Naive thymus-derived CD4-positive, alpha-beta T cell (primary cell): ENCODE measurements at regions of chr18 and their contacts with region 1.

Region 1: GRCh38 chr18:49447810-49448745 is 12.4 kb downstream of the DYM start:
- DNase-seq: peak in 8 of 9 donors; percentile 8 to 63 (median 28)
- ATAC-seq: peak; percentile 57
- H3K4me3 ChIP-seq: no peak overlapping the region
- H3K4me3 Mint-ChIP-seq: no peak overlapping the region
- H3K27ac ChIP-seq: no peak overlapping the region
- H3K27ac Mint-ChIP-seq: no peak overlapping the region
- H3K4me1 ChIP-seq: no peaks in the 10 kb centered on the region
- H3K4me1 Mint-ChIP-seq: peaks cover 11 to 48% (median 30%) of the 10 kb centered on the region in 7 donors
- H3K27me3 ChIP-seq: no peaks in the 10 kb centered on the region
- H3K27me3 Mint-ChIP-seq: no peaks in the 10 kb centered on the region

Region 2: GRCh38 chr18:49021433-49022129 is 426.5 kb before region 1 on chr18:
- CTCF ChIA-PET with region 1: no interaction called
- POLR2A ChIA-PET with region 1: no interaction called
- intact Hi-C with region 1: loop called in 1 of 2 experiments (anchors 1 kb)
- DNase-seq: peak in 1 of 9 donors; percentile 52
- ATAC-seq: peak; percentile 60
- H3K4me3 ChIP-seq: no peak overlapping the region
- H3K4me3 Mint-ChIP-seq: no peak overlapping the region
- H3K27ac ChIP-seq: no peak overlapping the region
- H3K27ac Mint-ChIP-seq: no peak overlapping the region
- H3K4me1 ChIP-seq: no peaks in the 10 kb centered on the region
- H3K4me1 Mint-ChIP-seq: peaks cover 0 to 11% (median 0%) of the 10 kb centered on the region in 7 donors
- H3K27me3 ChIP-seq: no peaks in the 10 kb centered on the region
- H3K27me3 Mint-ChIP-seq: no peaks in the 10 kb centered on the region

Region 3: GRCh38 chr18:49041435-49042245 is 406.4 kb before region 1 on chr18:
- CTCF ChIA-PET with region 1: no interaction called
- POLR2A ChIA-PET with region 1: no interaction called
- intact Hi-C with region 1: loop called in 1 of 2 experiments (anchors 5 kb)
- DNase-seq: peak in 8 of 9 donors; percentile 16 to 53 (median 44)
- ATAC-seq: peak; percentile 74
- H3K4me3 ChIP-seq: no peak overlapping the region
- H3K4me3 Mint-ChIP-seq: no peak overlapping the region
- H3K27ac ChIP-seq: no peak overlapping the region
- H3K27ac Mint-ChIP-seq: peak overlapping the region in 1 of 9 donors; percentile 35
- H3K4me1 ChIP-seq: no peaks in the 10 kb centered on the region
- H3K4me1 Mint-ChIP-seq: peaks cover 0 to 10% (median 7%) of the 10 kb centered on the region in 7 donors
- H3K27me3 ChIP-seq: no peaks in the 10 kb centered on the region
- H3K27me3 Mint-ChIP-seq: no peaks in the 10 kb centered on the region

Region 4: DNA sequence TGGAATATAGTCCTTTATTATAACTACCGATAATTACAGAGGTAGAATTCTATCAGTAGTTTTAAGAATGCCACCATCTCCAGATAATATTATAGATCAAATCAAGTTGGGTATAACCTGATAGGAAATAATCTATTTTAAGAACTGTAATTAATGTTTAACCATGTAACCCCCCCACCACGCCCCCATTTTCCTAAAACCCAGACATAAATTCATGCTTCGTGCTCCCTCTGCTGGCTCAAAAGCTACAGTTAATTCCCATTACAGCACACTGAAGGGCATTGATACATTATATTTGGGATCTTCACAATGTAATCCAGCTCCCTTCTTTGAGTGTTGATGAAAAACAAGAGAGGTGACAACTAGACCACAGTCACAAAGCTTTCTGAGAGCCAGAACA is 269.3 kb before region 1 on chr18:
- CTCF ChIA-PET with region 1: no interaction called
- POLR2A ChIA-PET with region 1: no interaction called
- intact Hi-C with region 1: loop called in 1 of 2 experiments (anchors 5 kb)
- DNase-seq: no peak
- ATAC-seq: no peak
- H3K4me3 ChIP-seq: no peak overlapping the region
- H3K4me3 Mint-ChIP-seq: no peak overlapping the region
- H3K27ac ChIP-seq: no peak overlapping the region
- H3K27ac Mint-ChIP-seq: no peak overlapping the region
- H3K4me1 ChIP-seq: no peaks in the 10 kb centered on the region
- H3K4me1 Mint-ChIP-seq: peaks cover 4 to 21% (median 9%) of the 10 kb centered on the region in 7 donors
- H3K27me3 ChIP-seq: no peaks in the 10 kb centered on the region
- H3K27me3 Mint-ChIP-seq: peaks cover 0 to 15% (median 0%) of the 10 kb centered on the region in 5 donors

Region 5: DNA sequence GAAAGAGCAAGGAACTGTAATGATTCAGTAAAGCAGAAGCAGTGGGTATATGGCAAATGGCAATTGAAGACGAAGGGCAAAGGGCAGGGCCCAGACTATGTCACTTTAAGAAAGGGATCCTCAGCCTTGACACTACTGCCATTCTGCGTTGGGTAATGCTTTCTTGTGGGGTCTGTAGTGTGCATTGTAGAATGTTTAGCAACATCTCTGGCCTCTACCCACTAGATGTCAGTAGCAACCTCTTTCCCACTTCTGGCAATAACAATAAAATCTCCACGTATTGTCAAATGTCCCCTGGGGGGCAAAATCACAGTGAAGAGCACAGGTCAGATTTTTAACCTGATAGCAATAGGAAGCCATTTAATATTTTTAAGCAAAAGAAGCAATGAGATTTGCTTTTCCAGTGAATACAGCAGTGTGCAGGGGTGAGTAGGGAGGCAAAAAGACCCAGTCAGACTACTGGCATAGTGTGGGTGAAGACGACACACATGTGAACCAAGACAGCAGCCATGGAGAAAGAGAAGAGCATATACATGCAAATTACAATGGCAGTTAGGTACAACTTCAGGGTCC is 197.2 kb before region 1 on chr18:
- CTCF ChIA-PET with region 1: no interaction called
- POLR2A ChIA-PET with region 1: no interaction called
- intact Hi-C with region 1: loop called in 1 of 2 experiments (anchors 2 kb)
- DNase-seq: no peak
- ATAC-seq: no peak
- H3K4me3 ChIP-seq: no peak overlapping the region
- H3K4me3 Mint-ChIP-seq: no peak overlapping the region
- H3K27ac ChIP-seq: no peak overlapping the region
- H3K27ac Mint-ChIP-seq: no peak overlapping the region
- H3K4me1 ChIP-seq: no peaks in the 10 kb centered on the region
- H3K4me1 Mint-ChIP-seq: peaks cover 0 to 2% (median 0%) of the 10 kb centered on the region in 7 donors
- H3K27me3 ChIP-seq: no peaks in the 10 kb centered on the region
- H3K27me3 Mint-ChIP-seq: no peaks in the 10 kb centered on the region

Region 6: GRCh38 chr18:49548229-49548636 is 100.2 kb after region 1 on chr18:
- CTCF ChIA-PET with region 1: no interaction called
- POLR2A ChIA-PET with region 1: no interaction called
- intact Hi-C with region 1: no loop called
- DNase-seq: no peak
- ATAC-seq: no peak
- H3K4me3 ChIP-seq: no peak overlapping the region
- H3K4me3 Mint-ChIP-seq: no peak overlapping the region
- H3K27ac ChIP-seq: no peak overlapping the region
- H3K27ac Mint-ChIP-seq: no peak overlapping the region
- H3K4me1 ChIP-seq: no peaks in the 10 kb centered on the region
- H3K4me1 Mint-ChIP-seq: no peaks in the 10 kb centered on the region
- H3K27me3 ChIP-seq: no peaks in the 10 kb centered on the region
- H3K27me3 Mint-ChIP-seq: peaks cover 17 to 30% (median 20%) of the 10 kb centered on the region in 5 donors

Region 7: GRCh38 chr18:50172367-50172766 is 724.3 kb after region 1 on chr18:
- CTCF ChIA-PET with region 1: no interaction called
- POLR2A ChIA-PET with region 1: no interaction called
- intact Hi-C with region 1: no loop called
- DNase-seq: no peak
- ATAC-seq: no peak
- H3K4me3 ChIP-seq: no peak overlapping the region
- H3K4me3 Mint-ChIP-seq: no peak overlapping the region
- H3K27ac ChIP-seq: no peak overlapping the region
- H3K27ac Mint-ChIP-seq: no peak overlapping the region
- H3K4me1 ChIP-seq: no peaks in the 10 kb centered on the region
- H3K4me1 Mint-ChIP-seq: peaks cover 0 to 1% (median 0%) of the 10 kb centered on the region in 7 donors
- H3K27me3 ChIP-seq: peaks cover 0 to 3% of the 10 kb centered on the region in 2 donors
- H3K27me3 Mint-ChIP-seq: peaks cover 12 to 26% (median 19%) of the 10 kb centered on the region in 5 donors

Region 8: GRCh38 chr18:50262977-50263376 is 814.9 kb after region 1 on chr18:
- CTCF ChIA-PET with region 1: no interaction called
- POLR2A ChIA-PET with region 1: no interaction called
- intact Hi-C with region 1: no loop called
- DNase-seq: no peak
- ATAC-seq: no peak
- H3K4me3 ChIP-seq: no peak overlapping the region
- H3K4me3 Mint-ChIP-seq: no peak overlapping the region
- H3K27ac ChIP-seq: no peak overlapping the region
- H3K27ac Mint-ChIP-seq: no peak overlapping the region
- H3K4me1 ChIP-seq: peaks cover 4 to 5% of the 10 kb centered on the region in 2 donors
- H3K4me1 Mint-ChIP-seq: peaks cover 8 to 24% (median 20%) of the 10 kb centered on the region in 7 donors
- H3K27me3 ChIP-seq: no peaks in the 10 kb centered on the region
- H3K27me3 Mint-ChIP-seq: peaks cover 0 to 20% (median 0%) of the 10 kb centered on the region in 5 donors